Calu3 (cell line): ENCODE measurements at regions of chr1 and their contacts with region 1.

Region 1: GRCh38 chr1:181356505-181357340 is 126.6 kb upstream of the CACNA1E start:
- DNase-seq: no peak
- H3K4me3 Mint-ChIP-seq: no peak overlapping the region
- H3K27ac Mint-ChIP-seq: no peak overlapping the region
- H3K4me1 Mint-ChIP-seq: no peaks in the 10 kb centered on the region
- H3K27me3 Mint-ChIP-seq: peaks cover 60% of the 10 kb centered on the region
- CTCF ChIP-seq: no peak

Region 2: DNA sequence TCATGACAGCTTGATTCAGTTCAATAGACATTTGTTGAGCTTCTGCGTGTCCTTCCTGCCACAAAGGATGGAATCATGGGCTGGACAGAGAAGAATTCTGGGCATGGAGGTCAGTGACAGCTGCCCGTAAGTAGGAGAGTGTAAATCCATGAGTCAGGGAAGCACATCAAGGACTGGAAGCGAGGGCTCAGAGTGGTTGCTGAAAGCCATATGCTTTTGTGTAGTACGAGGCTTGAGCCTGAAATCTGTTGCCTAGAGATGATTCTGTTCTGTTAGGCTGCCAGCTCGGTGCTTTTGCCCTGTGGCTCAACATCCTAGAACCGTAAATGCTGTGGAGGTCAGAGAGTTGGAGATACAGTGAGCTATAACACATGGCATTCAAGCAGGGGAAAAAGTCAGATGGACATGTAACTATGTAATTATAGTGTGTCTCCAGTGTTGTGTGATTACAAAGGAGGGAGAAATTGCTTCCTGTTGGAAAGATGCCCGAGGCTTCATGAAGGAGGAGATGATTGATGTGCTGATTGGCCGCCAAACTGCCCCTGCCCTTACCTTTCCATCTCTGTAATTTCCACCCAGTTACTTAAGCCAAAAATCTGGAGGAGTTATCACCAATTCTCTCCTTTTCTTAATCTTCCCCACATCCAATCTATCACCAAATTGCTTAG is 33.8 kb after region 1 on chr1:
- CTCF ChIA-PET with region 1: no interaction called
- intact Hi-C with region 1: loop called (anchors 5 kb)
- DNase-seq: peak; percentile 31
- H3K4me3 Mint-ChIP-seq: no peak overlapping the region
- H3K27ac Mint-ChIP-seq: no peak overlapping the region
- H3K4me1 Mint-ChIP-seq: no peaks in the 10 kb centered on the region
- H3K27me3 Mint-ChIP-seq: peaks cover 56% of the 10 kb centered on the region
- CTCF ChIP-seq: no peak

Region 3: DNA sequence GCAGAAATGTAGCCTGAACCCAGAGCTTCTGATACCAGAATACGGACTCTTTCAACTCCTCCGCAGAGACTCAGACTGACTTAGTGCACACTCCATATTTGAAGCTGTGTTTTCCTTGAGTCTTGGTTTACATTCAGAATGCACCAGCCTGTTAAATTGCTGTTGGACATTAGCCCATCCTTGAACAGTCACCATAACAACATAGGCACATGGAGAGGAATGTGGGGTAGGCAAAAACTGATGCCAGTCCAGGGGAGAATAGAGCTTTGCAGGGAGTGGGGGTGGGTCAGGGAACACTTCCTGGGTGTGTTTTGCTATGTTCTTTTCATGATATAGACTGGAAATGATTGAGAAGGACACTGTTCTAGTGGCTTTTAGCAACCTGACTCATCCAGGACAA is 50.3 kb after region 1 on chr1:
- CTCF ChIA-PET with region 1: no interaction called
- intact Hi-C with region 1: loop called (anchors 5 kb)
- DNase-seq: no peak
- H3K4me3 Mint-ChIP-seq: no peak overlapping the region
- H3K27ac Mint-ChIP-seq: no peak overlapping the region
- H3K4me1 Mint-ChIP-seq: no peaks in the 10 kb centered on the region
- H3K27me3 Mint-ChIP-seq: peaks cover 66% of the 10 kb centered on the region
- CTCF ChIP-seq: no peak

Region 4: DNA sequence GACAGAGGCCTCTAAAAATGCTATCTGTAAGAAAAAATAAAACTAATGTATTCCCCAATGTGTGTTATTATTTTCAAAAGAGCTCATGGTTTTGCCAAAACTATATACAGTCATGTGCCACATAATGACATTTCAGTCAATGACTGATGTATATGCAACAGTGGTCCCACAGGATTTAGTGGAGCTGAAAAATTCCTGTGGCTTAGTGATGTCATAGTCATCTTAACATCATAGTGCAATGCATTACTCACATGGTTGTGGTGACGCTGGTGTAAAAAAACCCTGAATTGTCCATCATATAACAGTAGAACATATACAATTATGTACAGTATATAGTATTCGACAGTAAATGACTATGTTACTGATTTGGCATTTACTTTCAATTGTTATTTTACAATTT is 299.0 kb after region 1 on chr1:
- CTCF ChIA-PET with region 1: no interaction called
- intact Hi-C with region 1: no loop called
- DNase-seq: no peak
- H3K4me3 Mint-ChIP-seq: no peak overlapping the region
- H3K27ac Mint-ChIP-seq: no peak overlapping the region
- H3K4me1 Mint-ChIP-seq: no peaks in the 10 kb centered on the region
- H3K27me3 Mint-ChIP-seq: no peaks in the 10 kb centered on the region
- CTCF ChIP-seq: no peak